AG04449 (cell line): ENCODE measurements at regions of chr15 and their contacts with region 1.

Region 1: DNA sequence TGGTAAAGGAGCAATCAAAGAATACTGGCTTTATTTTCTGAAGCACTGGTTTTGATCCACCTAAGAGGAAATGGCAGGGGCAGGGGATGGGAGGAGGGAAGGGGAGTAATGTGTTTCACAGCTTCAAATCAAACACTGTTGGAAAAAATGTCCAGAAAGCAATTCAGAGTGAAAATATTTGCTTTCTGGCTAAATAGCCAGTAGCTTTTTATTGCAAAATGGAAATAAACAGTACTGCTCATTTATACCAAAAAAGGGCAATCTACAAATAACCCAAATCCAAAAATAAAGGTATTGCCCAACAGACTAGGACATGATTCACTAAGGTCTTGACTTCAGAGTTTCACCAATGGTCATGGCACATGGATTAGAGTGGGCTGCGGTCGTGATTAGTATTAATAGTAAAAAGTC is 279.3 kb upstream of the THBS1 start:
- DNase-seq: peak; percentile 77
- H3K4me3 ChIP-seq: no peak overlapping the region
- CTCF ChIP-seq: no peak

Region 2: DNA sequence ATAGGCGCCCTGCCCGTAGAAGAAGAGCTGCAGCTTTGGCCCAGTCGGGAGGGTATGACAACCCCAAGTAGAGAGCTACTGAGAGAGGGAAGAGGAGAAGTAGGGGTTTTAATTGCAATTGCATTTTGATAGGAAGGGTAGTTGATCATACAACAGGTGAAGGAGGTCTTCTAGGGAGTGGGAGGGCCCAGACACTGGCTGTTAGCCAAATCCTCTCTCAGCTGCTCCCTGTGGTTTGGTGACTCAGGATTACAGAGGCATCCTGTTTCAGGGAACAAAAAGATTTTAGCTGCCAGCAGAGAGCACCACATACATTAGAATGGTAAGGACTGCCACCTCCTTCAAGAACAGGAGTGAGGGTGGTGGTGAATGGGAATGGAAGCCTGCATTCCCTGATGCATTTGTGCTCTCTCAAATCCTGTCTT is 129.6 kb before region 1 on chr15:
- CTCF ChIA-PET with region 1: no interaction called
- POLR2A ChIA-PET with region 1: interaction called, 10 read pairs
- DNase-seq: peak; percentile 90
- H3K4me3 ChIP-seq: no peak overlapping the region
- CTCF ChIP-seq: peak; percentile 44